ENCODE measurements at regions of chr17 and their contacts with region 1.

Region 1: DNA sequence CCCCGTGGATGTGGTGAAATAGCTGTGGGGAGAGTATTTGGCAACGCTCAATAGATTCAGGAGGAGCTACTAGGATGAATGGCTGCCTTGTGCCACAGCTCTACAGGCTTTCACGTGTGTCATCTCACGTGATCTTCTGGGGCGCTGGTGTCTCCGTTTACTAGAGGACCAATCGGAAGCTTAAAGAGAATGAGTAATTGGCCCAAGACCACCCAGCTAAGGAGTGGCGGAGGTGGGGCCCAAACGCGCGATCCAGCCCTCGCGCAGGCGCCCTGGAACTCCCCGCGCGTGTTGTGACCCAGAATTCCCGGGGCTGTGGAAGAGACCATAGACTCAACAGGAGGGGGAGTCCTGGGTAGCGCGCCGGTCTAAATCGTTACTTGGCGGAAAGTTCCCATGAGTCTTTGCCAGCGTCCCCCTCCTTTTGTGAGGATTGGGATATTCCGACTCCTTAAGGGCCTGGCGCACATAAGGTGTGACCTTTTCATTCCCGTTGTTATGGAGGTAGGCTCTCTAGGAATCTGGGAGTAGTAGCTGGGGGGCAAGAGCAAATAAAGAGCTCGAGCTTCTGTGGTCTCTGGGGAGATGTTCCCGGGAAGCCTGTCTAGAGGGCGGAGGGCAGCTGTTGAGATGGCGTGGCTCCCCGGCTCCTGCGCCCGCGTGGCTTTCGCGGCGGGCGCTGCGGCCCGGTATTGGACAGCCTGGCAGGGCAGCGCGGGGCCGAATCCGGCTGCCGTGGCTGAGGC is 23.4 kb downstream of the TRPV2 start:
- DNase-seq: peak; percentile 100
- ATAC-seq: peak; percentile 84 to 89
- H3K4me3 ChIP-seq: peak overlapping the region; percentile 75
- H3K27ac ChIP-seq: peak overlapping the region; percentile 90 to 99
- H3K4me1 ChIP-seq: peaks cover 37% of the 10 kb centered on the region
- CTCF ChIP-seq: no peak
- EP300 ChIP-seq: no peak
- POLR2A ChIP-seq: peak; percentile 96
- RAD21 ChIP-seq: no peak; a peak in 1 of 5 replicates

Region 2: DNA sequence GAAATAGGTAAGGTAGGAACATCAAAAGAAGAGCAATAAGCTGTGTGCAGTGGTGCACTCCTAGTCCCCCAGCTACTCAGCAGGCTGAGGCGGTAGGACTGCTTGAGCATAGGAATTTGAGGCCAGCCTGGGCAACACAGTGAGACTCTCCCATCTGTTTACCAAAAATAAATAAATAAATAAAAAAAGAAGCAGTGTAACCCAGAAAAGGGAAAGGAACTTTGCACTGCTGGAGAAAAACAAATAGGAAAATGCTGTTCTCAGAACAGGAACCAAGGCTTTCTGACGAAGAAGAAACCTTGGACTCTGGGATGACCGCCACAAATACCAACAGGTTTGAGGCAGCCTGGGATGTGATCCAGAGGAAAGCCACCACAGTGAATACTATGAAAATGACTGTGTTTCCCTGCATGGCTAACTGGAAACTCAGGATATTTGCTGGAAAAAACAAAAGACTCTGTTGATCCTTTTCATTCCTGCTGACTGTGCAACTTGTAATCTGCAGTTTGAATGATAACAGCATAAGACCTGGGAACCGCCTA is 397.9 kb before region 1 on chr17:
- CTCF ChIA-PET with region 1: no interaction called
- POLR2A ChIA-PET with region 1: no interaction called
- DNase-seq: no peak
- ATAC-seq: no peak
- H3K4me3 ChIP-seq: no peak overlapping the region
- H3K27ac ChIP-seq: no peak overlapping the region
- H3K4me1 ChIP-seq: peaks cover 5% of the 10 kb centered on the region; the same call in 1 of the 3 replicates
- CTCF ChIP-seq: no peak
- EP300 ChIP-seq: no peak
- POLR2A ChIP-seq: no peak
- RAD21 ChIP-seq: no peak

Region 3: GRCh38 chr17:16293931-16294330 is 144.8 kb before region 1 on chr17:
- CTCF ChIA-PET with region 1: no interaction called
- POLR2A ChIA-PET with region 1: no interaction called
- DNase-seq: no peak
- ATAC-seq: 0 out of 6 replicates have a peak, but pooled peaks of 1 of the 2 experiments have one; percentile 6
- H3K4me3 ChIP-seq: no peak overlapping the region
- H3K27ac ChIP-seq: peak overlapping the region in 1 of 2 experiments; percentile 42; a peak in 3 of 6 replicates
- H3K4me1 ChIP-seq: peaks cover 40% of the 10 kb centered on the region
- CTCF ChIP-seq: no peak
- EP300 ChIP-seq: no peak
- POLR2A ChIP-seq: no peak
- RAD21 ChIP-seq: no peak

Region 4: DNA sequence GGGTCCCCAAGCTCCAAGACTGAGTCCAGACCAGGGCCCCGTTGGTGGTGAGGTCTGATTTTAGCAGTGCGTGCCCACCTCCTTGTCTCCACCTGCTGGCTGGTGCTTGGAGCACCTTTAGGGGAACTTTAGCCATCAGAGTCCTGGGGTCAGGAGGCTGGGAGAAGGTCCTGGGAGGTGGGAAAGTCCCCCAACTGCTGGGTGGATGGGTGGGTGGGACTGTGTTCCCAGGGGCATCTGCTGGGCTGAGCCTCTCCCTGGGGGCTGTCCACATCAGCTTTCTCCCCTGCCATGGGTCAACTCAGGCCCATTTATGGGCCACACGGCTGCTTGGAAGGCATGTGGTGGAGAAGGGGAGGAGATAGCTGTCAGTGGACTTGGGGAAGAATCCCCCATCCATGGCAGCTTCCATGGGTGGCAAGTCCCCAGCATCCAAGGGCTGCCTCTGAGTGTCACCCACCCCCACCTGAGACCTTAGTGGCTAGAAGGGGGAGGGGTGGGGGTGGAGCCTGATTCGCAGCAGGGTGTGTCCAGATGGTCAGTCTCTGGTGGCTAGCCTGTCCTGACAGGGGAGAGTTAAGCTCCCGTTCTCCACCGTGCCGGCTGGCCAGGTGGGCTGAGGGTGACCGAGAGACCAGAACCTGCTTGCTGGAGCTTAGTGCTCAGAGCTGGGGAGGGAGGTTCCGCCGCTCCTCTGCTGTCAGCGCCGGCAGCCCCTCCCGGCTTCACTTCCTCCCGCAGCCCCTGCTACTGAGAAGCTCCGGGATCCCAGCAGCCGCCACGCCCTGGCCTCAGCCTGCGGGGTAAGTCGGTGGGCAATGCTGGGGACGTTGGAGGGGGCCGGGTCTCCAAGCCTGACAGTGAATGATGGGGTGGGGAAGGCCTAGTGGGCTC is 23.5 kb before region 1 on chr17 and contains the start of gene TRPV2:
- CTCF ChIA-PET with region 1: interaction called, 11 read pairs
- POLR2A ChIA-PET with region 1: interaction called, 16 read pairs
- DNase-seq: peak; percentile 53 to 55
- ATAC-seq: peak; percentile 40 to 81; a peak in 3 of 6 replicates
- H3K4me3 ChIP-seq: no peak within 1 kb of the TSS
- H3K27ac ChIP-seq: peak within 1 kb of the TSS in 1 of 2 experiments; percentile 39; a peak in 3 of 6 replicates
- H3K4me1 ChIP-seq: peaks cover 22% of the 10 kb centered on the region
- CTCF ChIP-seq: peak; percentile 46
- EP300 ChIP-seq: no peak
- POLR2A ChIP-seq: no peak
- RAD21 ChIP-seq: peak; percentile 29 to 55; a peak in 4 of 5 replicates
- polyA plus RNA-seq, gene TRPV2: 0.31 and 0.60 TPM in 2 replicates

Region 5: DNA sequence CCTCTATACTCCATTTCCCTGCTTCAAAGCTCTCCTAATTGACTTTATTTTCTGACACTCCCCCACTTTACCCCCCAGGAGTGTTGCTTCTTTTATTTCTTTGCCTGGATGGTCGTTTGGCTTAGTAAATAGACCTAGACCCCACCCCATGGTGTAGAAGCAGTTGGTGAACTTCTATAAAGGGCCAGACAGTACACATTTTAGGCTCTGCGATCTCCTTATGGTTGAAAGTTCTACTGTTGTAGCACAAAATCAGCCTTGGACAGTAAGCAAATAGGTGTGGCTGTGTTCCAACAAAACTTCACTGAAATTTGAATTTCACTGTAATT is 98.4 kb after region 1 on chr17:
- CTCF ChIA-PET with region 1: no interaction called
- POLR2A ChIA-PET with region 1: interaction called, 20 read pairs
- DNase-seq: no peak
- ATAC-seq: no peak
- H3K4me3 ChIP-seq: no peak overlapping the region
- H3K27ac ChIP-seq: no peak overlapping the region
- H3K4me1 ChIP-seq: no peaks in the 10 kb centered on the region
- CTCF ChIP-seq: no peak
- EP300 ChIP-seq: no peak
- POLR2A ChIP-seq: no peak
- RAD21 ChIP-seq: no peak